ENCODE measurements at regions of chr14 and their contacts with region 1.

Region 1: DNA sequence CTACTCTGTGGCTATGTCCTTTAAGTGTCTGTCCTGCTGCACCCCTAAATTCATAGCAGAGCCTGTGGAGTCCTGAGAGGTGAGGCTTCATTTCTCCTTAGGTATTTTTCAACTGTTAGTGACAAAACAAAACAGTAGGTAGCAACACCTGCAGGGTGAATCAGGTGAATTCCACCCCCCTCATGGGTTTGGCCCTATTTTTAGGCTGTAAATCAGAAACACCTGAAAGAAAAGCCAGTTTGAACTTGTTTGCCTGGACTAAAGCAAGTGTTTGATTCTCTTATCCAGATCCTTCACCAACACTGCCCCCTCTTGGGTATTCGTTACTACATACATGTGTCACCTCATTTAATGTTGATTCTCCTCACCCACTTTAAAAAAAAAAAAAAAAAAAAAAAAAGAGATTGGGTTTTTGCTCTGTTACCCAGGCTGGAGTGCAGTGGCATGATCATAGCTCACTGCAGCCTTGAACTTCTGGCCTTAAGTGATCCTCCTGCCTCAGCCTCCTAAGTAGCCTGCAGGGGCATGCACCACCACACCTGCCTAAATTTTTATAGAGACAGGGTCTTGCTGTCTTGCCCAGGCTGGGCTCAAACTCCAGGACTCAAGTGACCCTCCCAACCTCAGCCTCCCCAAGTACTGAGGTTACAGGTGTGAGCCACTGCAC is 10.3 kb downstream of the TBPL2 start:
- DNase-seq: peak; percentile 34 to 36
- ATAC-seq: peak; percentile 83

Region 2: GRCh38 chr14:56474419-56475022 is 1044.4 kb after region 1 on chr14:
- intact Hi-C with region 1: loop called in 1 of 2 experiments (anchors 10 kb)
- DNase-seq: no peak
- ATAC-seq: peak; percentile 49

Measured in left colon (tissue), 2 donors.